Activated CD4-positive, alpha-beta memory T cell treated with anti-CD3 and anti-CD28 coated beads for 36 hours (primary cell): ENCODE measurements at regions of chr3 and their contacts with region 1.

Region 1: GRCh38 chr3:157174649-157175498 is 14.9 kb upstream of the CCNL1 start:
- DNase-seq: peak; percentile 99
- H3K4me3 Mint-ChIP-seq: peak overlapping the region; percentile 89
- H3K27ac Mint-ChIP-seq: peak overlapping the region; percentile 99
- H3K4me1 Mint-ChIP-seq: peaks cover 25% of the 10 kb centered on the region
- H3K27me3 Mint-ChIP-seq: no peaks in the 10 kb centered on the region

Region 2: GRCh38 chr3:156816800-156817645 is 357.9 kb before region 1 on chr3:
- CTCF ChIA-PET with region 1: no interaction called
- POLR2A ChIA-PET with region 1: interaction called, 3 read pairs
- intact Hi-C with region 1: loop called (anchors 1 kb)
- DNase-seq: peak; percentile 92
- H3K4me3 Mint-ChIP-seq: peak overlapping the region; percentile 85
- H3K27ac Mint-ChIP-seq: peak overlapping the region; percentile 90
- H3K4me1 Mint-ChIP-seq: peaks cover 43% of the 10 kb centered on the region
- H3K27me3 Mint-ChIP-seq: no peaks in the 10 kb centered on the region

Region 3: DNA sequence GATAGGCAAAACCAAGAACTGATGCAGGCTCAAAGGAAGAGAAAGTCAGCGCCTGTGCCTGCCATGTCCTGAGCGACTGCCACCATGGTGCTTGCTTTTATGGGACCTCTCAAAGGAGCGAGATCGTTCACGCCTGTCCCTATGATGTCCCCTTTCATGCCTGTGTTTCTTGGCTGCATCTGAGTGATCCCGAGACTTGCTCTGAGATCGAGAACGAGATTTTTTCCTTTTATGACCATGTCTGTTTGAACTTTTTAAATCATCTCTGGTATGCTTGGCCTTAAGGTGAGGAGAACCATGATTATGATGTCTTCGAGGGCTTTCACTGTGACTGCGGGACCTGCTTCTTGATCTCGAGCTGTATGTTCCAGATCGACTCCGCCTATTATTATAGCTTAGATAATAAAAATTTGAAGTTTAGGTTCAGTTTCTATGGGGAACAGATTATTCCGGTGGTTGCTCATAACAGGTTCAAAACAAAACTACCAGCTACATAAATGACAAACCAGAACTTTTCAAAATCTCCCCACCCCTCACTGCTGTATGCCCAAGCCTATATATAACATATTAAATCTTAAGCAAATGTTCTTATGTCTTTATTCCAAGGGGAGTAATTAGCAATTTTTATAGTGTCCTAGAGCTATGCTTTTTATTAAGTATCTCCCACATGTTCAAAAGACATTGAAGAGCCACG is 26.5 kb before region 1 on chr3:
- CTCF ChIA-PET with region 1: no interaction called
- POLR2A ChIA-PET with region 1: interaction called, 14 read pairs
- intact Hi-C with region 1: no loop called
- DNase-seq: peak; percentile 53
- H3K4me3 Mint-ChIP-seq: peak overlapping the region; percentile 6
- H3K27ac Mint-ChIP-seq: peak overlapping the region; percentile 80
- H3K4me1 Mint-ChIP-seq: peaks cover 53% of the 10 kb centered on the region
- H3K27me3 Mint-ChIP-seq: no peaks in the 10 kb centered on the region

Region 4: GRCh38 chr3:157201648-157202278 is 26.9 kb after region 1 on chr3:
- CTCF ChIA-PET with region 1: interaction called, 9 read pairs
- POLR2A ChIA-PET with region 1: interaction called, 5 read pairs
- intact Hi-C with region 1: loop called (anchors 1 kb)
- DNase-seq: no peak
- H3K4me3 Mint-ChIP-seq: no peak overlapping the region
- H3K27ac Mint-ChIP-seq: no peak overlapping the region
- H3K4me1 Mint-ChIP-seq: no peaks in the 10 kb centered on the region
- H3K27me3 Mint-ChIP-seq: no peaks in the 10 kb centered on the region